ENCODE measurements at regions of chr1 and their contacts with region 1.

Region 1: DNA sequence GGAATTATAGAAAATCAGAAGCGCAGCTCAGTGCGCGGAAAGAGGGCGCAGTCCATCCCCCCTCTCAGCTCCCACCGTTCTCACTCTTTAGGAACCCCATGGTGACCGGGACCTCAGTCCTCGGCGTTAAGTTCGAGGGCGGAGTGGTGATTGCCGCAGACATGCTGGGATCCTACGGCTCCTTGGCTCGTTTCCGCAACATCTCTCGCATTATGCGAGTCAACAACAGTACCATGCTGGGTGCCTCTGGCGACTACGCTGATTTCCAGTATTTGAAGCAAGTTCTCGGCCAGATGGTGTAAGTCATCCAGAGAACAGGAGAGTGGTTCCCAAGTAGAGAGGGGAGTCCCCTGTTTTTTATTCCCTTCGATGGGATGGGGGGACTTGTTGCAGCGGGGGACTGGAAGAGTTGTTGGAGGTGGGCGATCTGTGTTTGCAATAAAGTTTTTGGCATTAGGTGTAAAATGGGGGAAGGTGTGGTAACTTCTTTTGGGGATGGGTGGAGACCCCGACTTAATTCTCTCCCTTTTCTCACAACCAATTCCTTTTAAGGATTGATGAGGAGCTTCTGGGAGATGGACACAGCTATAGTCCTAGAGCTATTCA is 620 bp downstream of the PSMB4 start:
- DNase-seq: peak in 1 of 2 experiments; percentile 4
- H3K4me3 ChIP-seq: peak overlapping the region; percentile 91
- H3K27ac ChIP-seq: peak overlapping the region; percentile 58
- H3K4me1 ChIP-seq: peaks cover 12% of the 10 kb centered on the region
- H3K27me3 ChIP-seq: no peaks in the 10 kb centered on the region
- CTCF ChIP-seq: no peak

Region 2: DNA sequence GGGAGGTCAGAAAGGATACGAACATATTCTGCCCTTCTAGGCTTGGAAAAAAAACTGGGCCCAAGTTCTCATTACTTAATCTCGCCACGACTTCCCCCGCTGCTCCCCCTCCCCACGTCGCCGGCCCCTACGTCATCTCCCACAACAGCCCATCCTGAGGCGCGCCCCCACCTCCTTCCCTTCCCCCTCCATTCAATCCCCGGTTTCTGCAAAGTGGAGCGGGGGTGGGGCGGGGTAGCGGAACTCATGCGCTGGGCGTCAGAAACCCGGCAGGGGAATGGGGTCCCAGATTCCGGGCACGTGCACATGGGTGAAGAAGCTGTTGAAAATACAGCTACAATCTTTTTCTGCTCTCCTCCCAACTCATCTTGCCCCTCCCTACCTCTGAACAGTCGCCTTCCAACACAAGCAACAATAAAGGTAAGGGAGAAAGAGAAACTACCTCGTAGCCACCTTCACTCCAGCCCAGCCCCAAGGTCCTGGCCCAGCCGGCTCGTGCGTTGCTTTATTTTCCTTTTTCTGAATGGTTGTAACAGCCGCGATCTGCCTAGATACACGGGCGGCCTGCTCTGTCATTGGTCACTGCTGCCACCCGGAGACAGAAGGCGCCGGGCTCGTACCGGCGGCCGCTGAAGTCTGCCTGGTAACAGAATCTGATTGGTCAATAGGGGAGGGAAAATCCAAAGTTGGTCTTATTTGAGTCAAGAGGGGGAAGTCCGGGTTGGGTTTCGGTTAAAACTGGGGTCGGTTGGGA is 53.0 kb before region 1 on chr1 and contains the start of gene RFX5:
- CTCF ChIA-PET with region 1: no interaction called
- POLR2A ChIA-PET with region 1: no interaction called
- intact Hi-C with region 1: loop called (anchors 2 kb)
- DNase-seq: peak; percentile 93 to 94
- H3K4me3 ChIP-seq: peak within 1 kb of the TSS; percentile 82
- H3K27ac ChIP-seq: peak within 1 kb of the TSS; percentile 83
- H3K4me1 ChIP-seq: peaks cover 11% of the 10 kb centered on the region
- H3K27me3 ChIP-seq: no peaks in the 10 kb centered on the region
- CTCF ChIP-seq: no peak
- total RNA-seq, gene RFX5: 73.6 and 75.7 TPM in 2 replicates

Region 3: DNA sequence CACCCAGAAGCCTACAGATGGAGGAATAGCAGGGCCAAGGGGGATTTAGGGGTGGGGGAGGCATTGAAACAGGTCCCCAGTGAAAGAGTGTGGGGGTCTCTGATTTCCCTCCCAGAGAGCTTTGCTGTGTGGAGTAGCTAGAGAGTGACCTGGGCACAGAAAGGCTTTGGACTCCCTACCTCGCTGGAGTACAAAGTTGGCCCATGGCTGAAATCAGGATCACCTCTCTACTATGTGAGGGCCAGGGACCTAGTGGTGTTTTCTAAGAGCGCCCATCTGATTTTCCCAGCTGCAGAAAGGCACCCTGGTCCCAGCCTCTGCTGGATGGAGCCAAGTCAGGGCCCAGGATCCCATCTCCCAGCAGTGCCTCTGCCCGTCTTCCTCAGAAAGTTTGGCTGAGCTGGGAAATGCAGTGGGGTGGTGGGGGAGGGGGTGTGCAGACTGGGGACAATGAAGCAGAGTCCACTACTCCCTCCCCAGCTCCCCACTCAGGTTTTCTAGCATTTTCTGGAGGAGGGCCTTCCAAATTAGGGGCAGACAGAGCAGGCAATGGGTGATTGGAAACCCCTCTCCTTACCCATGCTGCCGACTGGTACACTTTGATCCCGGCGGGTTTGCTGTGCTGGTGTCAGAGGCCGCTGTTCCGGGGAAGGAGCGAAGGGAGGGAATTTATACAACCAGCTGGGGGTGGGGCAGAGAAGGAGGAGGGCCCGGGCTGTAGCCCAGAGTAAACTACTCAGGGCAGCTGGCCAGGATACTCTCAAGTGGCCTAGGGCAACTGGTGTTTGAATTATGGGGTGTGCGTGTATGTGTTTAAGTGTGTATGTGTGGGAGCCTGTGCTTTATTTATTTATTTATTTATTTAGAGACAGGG is 27.7 kb before region 1 on chr1 and contains the start of gene SELENBP1:
- CTCF ChIA-PET with region 1: no interaction called
- POLR2A ChIA-PET with region 1: no interaction called
- intact Hi-C with region 1: no loop called
- DNase-seq: peak in 1 of 2 experiments; percentile 62
- H3K4me3 ChIP-seq: no peak within 1 kb of the TSS
- H3K27ac ChIP-seq: no peak within 1 kb of the TSS
- H3K4me1 ChIP-seq: no peaks in the 10 kb centered on the region; the same call in 1 of the 2 replicates
- H3K27me3 ChIP-seq: no peaks in the 10 kb centered on the region
- CTCF ChIP-seq: no peak
- total RNA-seq, gene SELENBP1: 11.3 and 18.4 TPM in 2 replicates

Region 4: GRCh38 chr1:151510957-151511635 is 111.1 kb after region 1 on chr1 and contains the start of gene CGN:
- CTCF ChIA-PET with region 1: no interaction called
- POLR2A ChIA-PET with region 1: no interaction called
- intact Hi-C with region 1: no loop called
- DNase-seq: peak; percentile 75 to 89
- H3K4me3 ChIP-seq: peak within 1 kb of the TSS; percentile 62
- H3K27ac ChIP-seq: peak within 1 kb of the TSS; percentile 96
- H3K4me1 ChIP-seq: peaks cover 57% of the 10 kb centered on the region
- H3K27me3 ChIP-seq: no peaks in the 10 kb centered on the region
- CTCF ChIP-seq: no peak
- total RNA-seq, gene CGN: 30.3 and 31.1 TPM in 2 replicates

Region 5: GRCh38 chr1:151641229-151641628 is 241.2 kb after region 1 on chr1:
- CTCF ChIA-PET with region 1: no interaction called
- POLR2A ChIA-PET with region 1: no interaction called
- intact Hi-C with region 1: no loop called
- DNase-seq: no peak
- H3K4me3 ChIP-seq: no peak overlapping the region
- H3K27ac ChIP-seq: no peak overlapping the region
- H3K4me1 ChIP-seq: no peaks in the 10 kb centered on the region
- H3K27me3 ChIP-seq: no peaks in the 10 kb centered on the region
- CTCF ChIP-seq: no peak

Region 6: DNA sequence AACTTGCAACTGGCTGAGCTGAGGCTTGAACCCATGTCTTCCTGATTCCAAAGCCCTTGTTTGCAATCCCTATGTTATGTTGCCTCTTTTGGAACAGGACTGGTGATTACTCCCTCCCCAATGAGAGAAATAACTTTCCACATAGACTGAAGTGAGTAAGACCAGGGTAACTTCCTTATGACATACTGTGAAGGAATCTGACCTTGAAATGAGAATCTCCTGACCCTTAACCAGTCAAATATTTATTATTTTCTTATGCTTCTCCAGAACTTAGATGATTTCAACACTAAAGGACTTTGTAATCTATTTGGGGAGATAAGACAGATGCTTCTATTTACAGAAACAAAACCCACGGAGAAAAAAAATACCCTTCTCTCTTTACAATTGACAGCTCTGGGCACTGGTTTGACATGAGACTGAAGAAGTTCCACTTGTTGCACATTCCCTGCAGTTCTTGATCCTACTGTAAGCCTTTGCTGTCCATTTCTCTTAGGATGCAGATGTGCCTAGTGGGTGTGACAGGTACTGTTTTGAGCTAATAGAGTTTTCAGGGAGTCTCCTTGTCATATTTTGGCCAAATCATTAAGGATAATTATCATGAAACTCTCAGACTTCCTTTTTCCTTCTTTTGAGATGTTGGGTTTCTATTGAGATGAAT is 762.9 kb after region 1 on chr1:
- CTCF ChIA-PET with region 1: no interaction called
- POLR2A ChIA-PET with region 1: interaction called, 12 read pairs
- intact Hi-C with region 1: no loop called
- DNase-seq: peak in 1 of 2 experiments; percentile 97
- H3K4me3 ChIP-seq: no peak overlapping the region
- H3K27ac ChIP-seq: peak overlapping the region; percentile 78
- H3K4me1 ChIP-seq: peaks cover 59% of the 10 kb centered on the region
- H3K27me3 ChIP-seq: no peaks in the 10 kb centered on the region
- CTCF ChIP-seq: 0 out of 2 replicates have a peak, but pooled peaks have one; percentile 29

Measured in PC-9 (cell line).